Natural killer cell (primary cell): ENCODE measurements at regions of chr9 and their contacts with region 1.

Region 1: DNA sequence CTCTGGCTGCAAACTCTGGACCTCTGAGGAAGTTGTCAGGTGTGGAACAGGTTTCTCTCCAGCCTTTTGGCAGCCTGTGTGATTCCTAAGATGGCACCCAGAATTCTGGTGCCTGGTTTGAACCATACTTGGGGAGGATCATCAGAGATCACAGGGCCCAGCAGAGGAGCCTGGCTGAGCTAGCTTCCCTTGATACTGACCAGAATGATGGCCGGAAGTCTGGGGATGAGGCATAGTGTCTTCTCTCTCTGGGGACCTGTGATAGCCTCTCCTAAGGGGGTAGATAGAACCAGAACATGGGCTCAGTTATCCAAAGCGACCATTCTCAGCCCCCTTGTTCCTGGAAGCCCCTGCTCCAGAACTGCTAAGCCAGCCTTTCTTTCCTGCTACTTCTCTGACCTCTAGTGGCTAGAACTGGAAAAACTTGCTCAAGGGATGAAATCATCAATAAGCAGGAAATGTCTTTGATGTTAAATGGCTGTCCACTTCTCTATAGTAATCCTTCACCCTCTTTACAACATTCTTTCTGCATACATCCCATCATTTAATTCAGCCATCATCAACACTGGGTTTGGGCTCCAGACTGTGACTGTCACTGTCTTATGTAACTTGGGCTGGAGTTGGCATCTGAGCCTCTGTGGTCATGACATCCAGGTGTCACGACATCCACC is 55.1 kb downstream of the C9orf152 start:
- DNase-seq: peak in 1 of 2 donors; percentile 67
- ATAC-seq: peak in 2 of 3 donors; percentile 31 to 36
- H3K4me3 ChIP-seq: no peak overlapping the region
- H3K4me3 Mint-ChIP-seq: peak overlapping the region; percentile 50
- H3K27ac ChIP-seq: peak overlapping the region; percentile 6
- H3K27ac Mint-ChIP-seq: peak overlapping the region; percentile 38 to 59
- H3K4me1 ChIP-seq: peaks cover 58% of the 10 kb centered on the region
- H3K4me1 Mint-ChIP-seq: peaks cover 86 to 88% of the 10 kb centered on the region in 2 donors
- H3K27me3 ChIP-seq: no peaks in the 10 kb centered on the region
- H3K27me3 Mint-ChIP-seq: no peaks in the 10 kb centered on the region
- CTCF ChIP-seq: peak; percentile 73

Region 2: GRCh38 chr9:109244157-109245132 is 908.4 kb before region 1 on chr9:
- intact Hi-C with region 1: loop called (anchors 2 kb)
- DNase-seq: peak; percentile 49 to 80
- ATAC-seq: peak; percentile 71 to 95 (median 80)
- H3K4me3 ChIP-seq: no peak overlapping the region
- H3K4me3 Mint-ChIP-seq: no peak overlapping the region
- H3K27ac ChIP-seq: no peak overlapping the region
- H3K27ac Mint-ChIP-seq: no peak overlapping the region
- H3K4me1 ChIP-seq: no peaks in the 10 kb centered on the region
- H3K4me1 Mint-ChIP-seq: no peaks in the 10 kb centered on the region
- H3K27me3 ChIP-seq: no peaks in the 10 kb centered on the region
- H3K27me3 Mint-ChIP-seq: peaks cover 23 to 47% of the 10 kb centered on the region in 2 donors
- CTCF ChIP-seq: peak; percentile 90

Region 3: DNA sequence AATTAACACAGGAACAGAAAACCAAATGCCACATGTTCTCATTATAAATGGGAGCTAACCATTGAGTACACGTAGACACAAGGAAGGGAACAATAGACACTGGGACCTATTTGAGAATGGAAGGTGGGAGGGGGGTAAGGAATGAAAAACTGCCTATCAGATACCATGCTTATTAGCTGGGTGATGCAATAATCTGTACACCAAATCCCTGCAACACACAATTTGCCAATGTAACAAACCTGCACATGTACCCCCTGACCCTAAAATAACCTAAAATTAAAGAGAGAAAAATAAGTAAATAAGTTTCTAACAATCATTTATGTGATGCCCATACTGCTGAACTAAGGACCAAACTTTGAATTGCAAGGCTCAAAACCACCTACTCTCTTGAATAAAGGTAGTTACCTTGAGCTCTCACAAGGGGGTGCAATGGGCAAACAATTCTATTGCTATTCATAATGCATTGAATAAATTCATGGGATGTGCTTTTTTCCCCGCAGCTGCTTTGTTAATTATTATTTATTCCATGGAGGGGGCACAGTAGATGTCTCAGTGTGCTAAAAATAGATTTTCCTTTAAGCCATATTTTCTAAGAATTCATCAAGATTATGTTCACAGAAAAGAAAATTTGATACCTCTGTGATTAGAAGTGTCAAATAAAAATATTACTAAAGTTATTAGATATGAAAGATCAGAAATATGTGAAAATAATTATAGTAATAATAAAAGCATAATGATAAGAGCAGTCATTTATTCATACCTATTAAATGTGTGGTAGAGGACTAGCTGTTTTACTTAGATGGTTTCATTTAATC is 578.6 kb before region 1 on chr9:
- intact Hi-C with region 1: loop called (anchors 2 kb)
- DNase-seq: peak in 1 of 2 donors; percentile 33
- ATAC-seq: no peak
- H3K4me3 ChIP-seq: no peak overlapping the region
- H3K4me3 Mint-ChIP-seq: no peak overlapping the region
- H3K27ac ChIP-seq: no peak overlapping the region
- H3K27ac Mint-ChIP-seq: no peak overlapping the region
- H3K4me1 ChIP-seq: no peaks in the 10 kb centered on the region
- H3K4me1 Mint-ChIP-seq: no peaks in the 10 kb centered on the region
- H3K27me3 ChIP-seq: no peaks in the 10 kb centered on the region
- H3K27me3 Mint-ChIP-seq: peaks cover 3 to 4% of the 10 kb centered on the region in 2 donors
- CTCF ChIP-seq: peak; percentile 35

Region 4: DNA sequence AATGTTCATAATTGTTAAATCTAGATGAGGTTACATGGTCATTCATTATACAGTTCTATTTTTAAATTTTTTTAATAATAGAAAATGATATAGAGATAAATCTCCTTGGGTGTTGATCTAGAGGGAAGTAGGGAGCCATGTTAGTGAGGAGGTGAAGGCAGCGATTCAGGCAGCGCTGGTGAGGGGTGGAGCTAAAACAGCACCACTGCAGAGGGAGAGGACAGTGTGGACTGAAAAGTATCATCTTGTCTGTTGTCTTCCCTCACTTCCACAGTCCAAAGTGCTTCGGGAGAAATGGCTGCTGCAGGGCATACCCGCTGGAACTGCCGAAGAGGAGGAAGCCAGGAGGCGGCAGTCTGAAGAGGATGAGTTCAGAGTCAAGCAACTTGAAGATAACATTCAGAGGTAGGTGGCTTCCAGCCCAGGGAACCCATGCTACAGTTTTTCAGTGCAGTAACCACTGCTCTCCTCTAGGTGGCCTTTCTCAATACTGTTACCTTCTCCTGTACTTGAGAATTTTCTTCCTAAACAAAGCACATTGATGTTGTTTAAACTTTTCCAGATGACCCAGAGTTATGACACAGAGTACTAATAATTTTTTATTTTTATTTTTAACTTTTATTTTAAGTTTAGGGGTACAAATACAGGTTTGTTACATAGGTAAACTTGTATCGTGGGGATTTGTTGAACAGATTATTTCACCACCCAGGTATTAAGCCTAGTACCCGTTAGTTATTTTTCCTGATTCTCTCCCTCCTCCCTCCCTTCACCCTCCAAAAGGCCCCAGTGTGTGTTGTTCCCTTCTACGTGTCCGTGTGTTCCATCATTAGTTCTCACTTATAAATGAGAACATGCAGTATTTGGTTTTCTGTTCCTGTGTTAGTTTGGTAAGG is 272.3 kb before region 1 on chr9:
- intact Hi-C with region 1: loop called (anchors 1 kb)
- DNase-seq: peak in 1 of 2 donors; percentile 53
- ATAC-seq: peak in 2 of 3 donors; percentile 61 to 76
- H3K4me3 ChIP-seq: no peak overlapping the region
- H3K4me3 Mint-ChIP-seq: no peak overlapping the region
- H3K27ac ChIP-seq: no peak overlapping the region
- H3K27ac Mint-ChIP-seq: no peak overlapping the region
- H3K4me1 ChIP-seq: no peaks in the 10 kb centered on the region
- H3K4me1 Mint-ChIP-seq: no peaks in the 10 kb centered on the region
- H3K27me3 ChIP-seq: no peaks in the 10 kb centered on the region
- H3K27me3 Mint-ChIP-seq: peaks cover 4 to 21% of the 10 kb centered on the region in 2 donors
- CTCF ChIP-seq: peak; percentile 77

Region 5: GRCh38 chr9:109903515-109904138 is 249.2 kb before region 1 on chr9:
- intact Hi-C with region 1: loop called (anchors 1 kb)
- DNase-seq: peak in 1 of 2 donors; percentile 80
- ATAC-seq: peak in 2 of 3 donors; percentile 29 to 64
- H3K4me3 ChIP-seq: no peak overlapping the region
- H3K4me3 Mint-ChIP-seq: no peak overlapping the region
- H3K27ac ChIP-seq: no peak overlapping the region
- H3K27ac Mint-ChIP-seq: no peak overlapping the region
- H3K4me1 ChIP-seq: no peaks in the 10 kb centered on the region
- H3K4me1 Mint-ChIP-seq: no peaks in the 10 kb centered on the region
- H3K27me3 ChIP-seq: no peaks in the 10 kb centered on the region
- H3K27me3 Mint-ChIP-seq: peaks cover 4 to 20% of the 10 kb centered on the region in 2 donors
- CTCF ChIP-seq: peak; percentile 53

Region 6: DNA sequence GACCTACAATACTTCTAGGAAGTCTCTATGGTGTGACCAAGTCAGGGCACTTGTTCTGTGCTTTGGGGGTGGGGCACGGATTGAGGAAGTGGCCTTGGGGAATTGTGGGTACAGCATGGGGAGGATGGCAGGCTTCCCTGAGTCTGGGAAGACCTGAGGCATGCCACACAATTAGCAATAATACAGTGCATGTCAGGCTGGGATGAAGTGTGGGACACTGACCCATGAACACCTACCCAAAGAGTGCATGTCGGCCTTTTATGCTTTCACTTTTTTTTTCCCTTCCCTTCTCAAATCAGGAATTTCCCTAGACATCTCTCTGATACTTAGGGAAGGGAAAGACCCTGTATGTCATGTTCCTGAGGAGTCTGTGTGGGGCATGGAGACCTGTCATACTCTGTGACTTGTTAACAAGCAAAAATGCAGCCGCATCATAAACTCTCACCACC is 226.4 kb before region 1 on chr9:
- intact Hi-C with region 1: no loop called
- DNase-seq: no peak
- ATAC-seq: no peak
- H3K4me3 ChIP-seq: no peak overlapping the region
- H3K4me3 Mint-ChIP-seq: no peak overlapping the region
- H3K27ac ChIP-seq: no peak overlapping the region
- H3K27ac Mint-ChIP-seq: no peak overlapping the region
- H3K4me1 ChIP-seq: peaks cover 3% of the 10 kb centered on the region
- H3K4me1 Mint-ChIP-seq: no peaks in the 10 kb centered on the region
- H3K27me3 ChIP-seq: no peaks in the 10 kb centered on the region
- H3K27me3 Mint-ChIP-seq: peaks cover 6 to 17% of the 10 kb centered on the region in 2 donors
- CTCF ChIP-seq: no peak

Region 7: DNA sequence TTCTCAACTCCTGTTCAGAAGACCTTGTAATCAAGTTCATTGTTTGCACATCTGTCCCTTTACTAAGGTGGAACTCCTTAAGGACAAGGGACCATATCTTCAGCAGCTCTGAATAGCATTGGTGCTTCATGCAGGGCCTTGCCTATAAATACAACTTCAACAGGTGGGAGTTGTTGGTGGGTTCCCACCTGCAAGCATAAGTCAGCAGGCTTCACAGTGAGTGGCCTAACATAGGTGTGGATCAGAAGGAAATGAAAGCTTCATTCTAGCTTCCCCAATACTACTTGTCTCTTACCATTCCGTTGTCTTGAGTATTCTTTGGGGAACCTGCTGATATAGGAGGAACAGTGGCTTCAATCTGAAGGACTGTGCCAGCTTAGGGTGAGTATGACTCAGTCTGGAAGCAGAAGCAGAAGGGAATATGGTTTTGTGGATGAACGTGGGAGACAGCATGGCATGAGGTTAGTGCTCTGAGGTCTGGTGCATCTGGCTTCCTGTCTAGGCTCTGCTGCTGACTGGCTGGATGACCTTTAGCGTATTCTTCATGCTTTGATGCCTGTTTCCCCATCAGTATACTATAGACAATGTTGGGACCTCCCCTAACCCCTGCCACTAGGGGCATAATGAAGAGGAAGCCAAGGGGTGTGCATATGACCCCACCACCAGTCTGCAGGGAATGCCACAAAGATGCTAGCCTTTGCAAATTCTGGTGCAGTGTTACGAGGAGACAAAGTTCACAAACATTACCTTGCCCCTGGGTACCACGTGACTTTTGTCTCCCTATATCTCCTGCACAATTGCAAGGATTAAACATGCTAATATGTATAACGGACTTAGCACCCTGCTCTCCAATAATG is 180.6 kb before region 1 on chr9:
- intact Hi-C with region 1: no loop called
- DNase-seq: peak in 1 of 2 donors; percentile 12
- ATAC-seq: peak in 1 of 3 donors; percentile 24
- H3K4me3 ChIP-seq: no peak overlapping the region
- H3K4me3 Mint-ChIP-seq: no peak overlapping the region
- H3K27ac ChIP-seq: peak overlapping the region; percentile 11
- H3K27ac Mint-ChIP-seq: no peak overlapping the region
- H3K4me1 ChIP-seq: peaks cover 27% of the 10 kb centered on the region
- H3K4me1 Mint-ChIP-seq: no peaks in the 10 kb centered on the region
- H3K27me3 ChIP-seq: no peaks in the 10 kb centered on the region
- H3K27me3 Mint-ChIP-seq: peaks cover 0 to 8% of the 10 kb centered on the region in 2 donors
- CTCF ChIP-seq: no peak

Region 8: GRCh38 chr9:110133608-110134210 is 19.1 kb before region 1 on chr9:
- intact Hi-C with region 1: no loop called
- DNase-seq: no peak
- ATAC-seq: no peak
- H3K4me3 ChIP-seq: no peak overlapping the region
- H3K4me3 Mint-ChIP-seq: no peak overlapping the region
- H3K27ac ChIP-seq: no peak overlapping the region
- H3K27ac Mint-ChIP-seq: no peak overlapping the region
- H3K4me1 ChIP-seq: peaks cover 1% of the 10 kb centered on the region
- H3K4me1 Mint-ChIP-seq: no peaks in the 10 kb centered on the region
- H3K27me3 ChIP-seq: no peaks in the 10 kb centered on the region
- H3K27me3 Mint-ChIP-seq: no peaks in the 10 kb centered on the region
- CTCF ChIP-seq: no peak

Region 9: DNA sequence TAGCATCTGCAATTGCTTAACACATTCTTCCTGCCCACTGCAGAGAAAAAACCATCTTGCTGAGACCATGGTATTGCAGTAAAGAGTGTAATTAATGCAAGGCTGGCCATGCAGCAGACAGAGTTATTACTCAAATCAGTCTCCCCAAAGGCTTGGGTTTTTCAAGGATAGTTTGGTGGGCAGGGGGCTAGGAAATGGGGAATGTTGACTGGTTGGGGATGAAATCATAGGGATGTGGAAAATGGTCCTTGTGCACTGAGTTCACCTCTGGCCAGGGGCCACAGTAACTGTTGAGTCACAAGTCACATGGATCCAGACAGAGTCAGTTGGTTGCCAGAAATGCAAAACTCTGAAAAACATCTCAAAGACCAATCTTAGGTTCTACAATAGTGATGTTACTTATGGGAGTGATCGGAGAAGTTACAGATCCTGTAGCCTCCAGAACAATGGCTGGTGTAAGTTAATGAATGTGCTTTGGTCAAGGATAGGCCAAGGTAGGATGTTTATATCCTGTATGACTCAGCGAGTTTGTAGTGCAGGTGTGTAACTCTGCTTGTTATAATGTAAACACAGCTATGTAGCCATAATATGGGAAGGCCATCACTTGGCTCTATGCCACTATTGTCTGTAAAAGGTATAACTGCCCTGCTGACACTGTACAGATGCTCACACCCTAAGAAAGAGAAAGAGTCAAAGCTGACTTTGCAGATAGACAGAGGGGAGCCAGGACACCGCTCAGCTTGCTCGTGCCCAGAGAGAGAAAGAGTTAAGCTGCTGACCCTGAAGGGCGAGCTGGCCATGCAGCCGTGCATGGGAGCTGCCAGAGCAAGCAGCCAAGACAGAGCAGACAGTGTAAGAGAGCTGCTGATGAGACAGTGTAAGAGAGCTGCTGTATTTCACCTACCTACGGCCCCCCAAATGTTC is 27.9 kb after region 1 on chr9:
- intact Hi-C with region 1: no loop called
- DNase-seq: no peak
- ATAC-seq: no peak
- H3K4me3 ChIP-seq: no peak overlapping the region
- H3K4me3 Mint-ChIP-seq: no peak overlapping the region
- H3K27ac ChIP-seq: no peak overlapping the region
- H3K27ac Mint-ChIP-seq: no peak overlapping the region
- H3K4me1 ChIP-seq: no peaks in the 10 kb centered on the region
- H3K4me1 Mint-ChIP-seq: peaks cover 6 to 7% of the 10 kb centered on the region in 2 donors
- H3K27me3 ChIP-seq: no peaks in the 10 kb centered on the region
- H3K27me3 Mint-ChIP-seq: no peaks in the 10 kb centered on the region
- CTCF ChIP-seq: no peak